ENCODE measurements at regions of chr1 and their contacts with region 1.

Region 1: GRCh38 chr1:14929547-14930246 is 223.8 kb upstream of the TMEM51 start:
- DNase-seq: peak; percentile 57 to 90 (median 73)
- ATAC-seq: peak; percentile 85
- H3K4me3 ChIP-seq: no peak overlapping the region
- H3K27ac ChIP-seq: peak overlapping the region; percentile 54; the same call in 2 of the 3 replicates
- H3K4me1 ChIP-seq: peaks cover 38 to 50% of the 10 kb centered on the region in 2 experiments
- H3K27me3 ChIP-seq: no peaks in the 10 kb centered on the region
- CTCF ChIP-seq: no peak
- EP300 ChIP-seq: peak; percentile 59; the same call in 1 of the 2 replicates
- POLR2A ChIP-seq: no peak
- RAD21 ChIP-seq: no peak

Region 2: GRCh38 chr1:15021065-15021745 is 91.5 kb after region 1 on chr1:
- CTCF ChIA-PET with region 1: no interaction called
- POLR2A ChIA-PET with region 1: interaction called, 3 read pairs
- in situ Hi-C with region 1: loop called (anchors 5 kb)
- intact Hi-C with region 1: loop called (anchors 5 kb)
- DNase-seq: peak in 1 of 4 experiments; percentile 35
- ATAC-seq: peak; percentile 37
- H3K4me3 ChIP-seq: no peak overlapping the region
- H3K27ac ChIP-seq: no peak overlapping the region
- H3K4me1 ChIP-seq: peaks cover 6 to 11% of the 10 kb centered on the region in 2 experiments; a peak in 3 of 5 replicates
- H3K27me3 ChIP-seq: no peaks in the 10 kb centered on the region
- CTCF ChIP-seq: no peak
- EP300 ChIP-seq: no peak
- POLR2A ChIP-seq: no peak
- RAD21 ChIP-seq: no peak